ENCODE measurements at regions of chr22 and their contacts with region 1.

Region 1: DNA sequence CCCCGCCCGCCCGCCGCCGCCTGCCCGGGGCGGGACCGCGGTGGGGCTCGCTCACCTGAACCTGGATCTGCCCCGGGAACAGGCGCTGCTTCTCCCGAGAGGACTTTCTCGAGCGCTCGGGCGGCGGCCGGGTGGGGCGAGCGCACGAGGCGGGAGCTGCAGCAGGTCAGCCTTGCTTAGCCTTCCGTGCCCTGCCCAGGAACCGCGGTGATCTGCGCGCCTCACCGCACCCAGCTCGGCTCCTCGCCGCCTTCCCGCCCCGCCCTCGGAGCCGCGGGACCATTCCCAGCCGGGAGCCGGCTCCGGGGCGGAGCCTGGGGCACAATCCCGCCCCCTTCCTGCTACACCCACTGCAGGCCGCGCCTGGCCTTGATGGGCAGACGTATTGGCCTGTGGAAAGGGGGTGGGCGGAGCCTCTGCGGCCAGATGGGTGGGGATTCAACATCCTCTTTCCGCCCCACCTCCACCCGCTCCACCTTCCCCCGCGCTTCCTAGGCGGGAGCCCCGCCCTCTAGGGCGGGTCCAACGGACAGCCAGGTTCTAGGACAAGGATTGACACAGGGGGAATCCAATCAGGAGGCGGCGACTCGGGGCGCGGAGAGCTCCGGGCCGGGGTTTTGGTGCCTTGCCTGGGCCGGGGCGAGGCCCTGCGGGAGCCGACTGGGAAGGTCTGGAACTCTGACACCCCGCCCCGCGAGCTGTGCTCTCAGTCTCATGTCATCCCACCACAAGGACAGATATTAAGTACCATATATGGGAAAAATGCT is at the start of gene MYH9:
- DNase-seq: peak; percentile 96 to 100 (median 99)
- ATAC-seq: peak; percentile 77
- H3K4me3 ChIP-seq: peak within 1 kb of the TSS; percentile 88 to 94
- H3K4me3 Mint-ChIP-seq: peak within 1 kb of the TSS; percentile 94
- H3K27ac ChIP-seq: peak within 1 kb of the TSS; percentile 79 to 82
- H3K27ac Mint-ChIP-seq: peak within 1 kb of the TSS; percentile 95
- H3K4me1 ChIP-seq: peaks cover 27% of the 10 kb centered on the region
- H3K4me1 Mint-ChIP-seq: peaks cover 43% of the 10 kb centered on the region
- H3K27me3 ChIP-seq: no peaks in the 10 kb centered on the region
- H3K27me3 Mint-ChIP-seq: no peaks in the 10 kb centered on the region
- CTCF ChIP-seq: no peak
- total RNA-seq, gene MYH9: 703 to 757 TPM

Region 2: GRCh38 chr22:35961480-35962295 is 426.2 kb before region 1 on chr22:
- CTCF ChIA-PET with region 1: no interaction called
- POLR2A ChIA-PET with region 1: no interaction called
- intact Hi-C with region 1: no loop called
- DNase-seq: no peak
- ATAC-seq: no peak
- H3K4me3 ChIP-seq: no peak overlapping the region
- H3K4me3 Mint-ChIP-seq: no peak overlapping the region
- H3K27ac ChIP-seq: no peak overlapping the region
- H3K27ac Mint-ChIP-seq: no peak overlapping the region
- H3K4me1 ChIP-seq: no peaks in the 10 kb centered on the region
- H3K4me1 Mint-ChIP-seq: no peaks in the 10 kb centered on the region
- H3K27me3 ChIP-seq: no peaks in the 10 kb centered on the region
- H3K27me3 Mint-ChIP-seq: peaks cover 5% of the 10 kb centered on the region
- CTCF ChIP-seq: no peak

Region 3: DNA sequence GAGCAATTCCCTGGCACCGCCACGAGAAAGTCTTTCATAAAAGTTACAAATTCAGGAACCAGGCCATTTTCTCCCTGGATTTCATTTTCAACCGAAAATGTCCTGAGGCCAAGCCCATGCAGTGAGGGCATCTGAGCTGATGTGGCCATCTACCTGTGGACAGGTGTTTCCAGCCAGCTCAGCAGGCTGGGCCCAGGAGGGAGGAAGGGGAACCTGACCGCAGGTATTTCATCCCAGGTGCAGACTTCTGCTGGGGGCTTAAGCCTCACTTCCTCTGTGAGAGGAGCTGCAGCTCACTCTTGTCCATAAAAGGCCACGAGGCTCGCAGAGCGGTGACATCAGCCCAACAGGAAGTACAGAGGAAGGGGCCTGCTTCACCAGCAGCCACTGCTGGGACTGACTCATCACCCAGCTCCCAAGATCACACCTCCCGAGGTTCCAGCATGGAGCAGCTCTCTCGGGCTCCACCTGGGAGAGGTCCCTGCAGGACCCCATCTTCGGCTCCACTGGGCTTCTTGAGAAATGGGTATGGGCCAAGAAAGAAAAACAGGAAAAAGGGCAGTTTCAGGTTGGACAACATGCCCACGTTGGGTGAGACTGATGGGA is 56.5 kb before region 1 on chr22:
- CTCF ChIA-PET with region 1: interaction called, 29 read pairs
- POLR2A ChIA-PET with region 1: interaction called, 124 read pairs
- intact Hi-C with region 1: loop called (anchors 1 kb)
- DNase-seq: peak; percentile 48 to 94 (median 81)
- ATAC-seq: peak; percentile 51
- H3K4me3 ChIP-seq: peak overlapping the region; percentile 38 to 42
- H3K4me3 Mint-ChIP-seq: peak overlapping the region; percentile 86
- H3K27ac ChIP-seq: peak overlapping the region; percentile 80 to 93
- H3K27ac Mint-ChIP-seq: peak overlapping the region; percentile 99
- H3K4me1 ChIP-seq: peaks cover 95% of the 10 kb centered on the region
- H3K4me1 Mint-ChIP-seq: peaks cover 99% of the 10 kb centered on the region
- H3K27me3 ChIP-seq: no peaks in the 10 kb centered on the region
- H3K27me3 Mint-ChIP-seq: no peaks in the 10 kb centered on the region
- CTCF ChIP-seq: no peak

Region 4: DNA sequence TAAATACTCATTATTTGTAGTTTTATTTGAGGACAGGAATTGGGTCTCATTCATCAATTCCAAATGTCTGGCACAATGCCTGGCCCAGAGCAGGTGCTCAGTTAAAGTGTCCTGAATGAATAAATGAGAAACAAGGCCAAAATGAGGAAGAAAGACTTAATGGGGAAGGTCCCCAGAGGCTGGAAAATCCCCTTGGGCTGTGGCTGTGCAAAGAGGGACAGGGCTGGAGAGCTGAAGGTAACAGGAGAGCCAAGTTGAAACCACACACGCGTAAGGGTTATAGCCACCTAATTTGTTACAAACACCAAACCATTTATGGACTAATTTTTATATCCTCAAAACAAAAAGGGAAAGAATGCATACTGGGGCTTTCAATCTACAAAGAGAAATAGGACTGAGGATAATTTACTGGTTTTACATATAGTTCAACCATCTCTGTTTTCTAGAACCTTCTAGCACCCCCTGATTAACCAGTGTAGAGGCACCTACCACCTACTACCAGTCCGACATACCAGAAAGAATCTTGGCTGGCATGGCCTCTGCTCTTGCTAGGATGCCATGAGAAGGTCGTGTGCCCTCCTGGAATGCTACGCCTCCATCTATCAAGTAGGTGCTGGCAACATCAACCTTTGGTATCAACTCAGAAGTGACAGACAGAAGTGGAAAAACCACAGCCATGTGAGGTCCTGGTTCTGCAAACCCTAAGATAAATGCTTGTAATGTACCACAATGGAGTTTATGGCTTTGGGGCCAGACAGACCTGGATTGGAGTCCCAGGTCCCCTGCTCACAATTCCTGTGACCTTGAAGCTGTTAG is 28.5 kb before region 1 on chr22:
- CTCF ChIA-PET with region 1: interaction called, 6 read pairs
- POLR2A ChIA-PET with region 1: interaction called, 16 read pairs
- intact Hi-C with region 1: loop called (anchors 1 to 2 kb)
- DNase-seq: peak in 2 of 9 experiments; percentile 62 to 75
- ATAC-seq: no peak
- H3K4me3 ChIP-seq: no peak overlapping the region
- H3K4me3 Mint-ChIP-seq: peak overlapping the region; percentile 67
- H3K27ac ChIP-seq: peak overlapping the region in 1 of 2 experiments; percentile 77
- H3K27ac Mint-ChIP-seq: peak overlapping the region; percentile 92
- H3K4me1 ChIP-seq: peaks cover 97% of the 10 kb centered on the region
- H3K4me1 Mint-ChIP-seq: peaks cover 95% of the 10 kb centered on the region
- H3K27me3 ChIP-seq: no peaks in the 10 kb centered on the region
- H3K27me3 Mint-ChIP-seq: no peaks in the 10 kb centered on the region
- CTCF ChIP-seq: no peak

Region 5: GRCh38 chr22:36409911-36410756 is 22.2 kb after region 1 on chr22:
- CTCF ChIA-PET with region 1: interaction called, 5 read pairs
- POLR2A ChIA-PET with region 1: interaction called, 26 read pairs
- intact Hi-C with region 1: loop called (anchors 1 to 2 kb)
- DNase-seq: peak; percentile 18 to 85 (median 75)
- ATAC-seq: peak; percentile 70
- H3K4me3 ChIP-seq: peak overlapping the region; percentile 28 to 58
- H3K4me3 Mint-ChIP-seq: peak overlapping the region; percentile 72
- H3K27ac ChIP-seq: peak overlapping the region; percentile 40 to 53
- H3K27ac Mint-ChIP-seq: peak overlapping the region; percentile 93
- H3K4me1 ChIP-seq: peaks cover 57% of the 10 kb centered on the region
- H3K4me1 Mint-ChIP-seq: peaks cover 51% of the 10 kb centered on the region
- H3K27me3 ChIP-seq: no peaks in the 10 kb centered on the region
- H3K27me3 Mint-ChIP-seq: no peaks in the 10 kb centered on the region
- CTCF ChIP-seq: no peak

Region 6: GRCh38 chr22:36470162-36470993 is 82.4 kb after region 1 on chr22:
- CTCF ChIA-PET with region 1: interaction called, 28 read pairs
- POLR2A ChIA-PET with region 1: interaction called, 7 read pairs
- intact Hi-C with region 1: no loop called
- DNase-seq: peak; percentile 71 to 91 (median 82)
- ATAC-seq: peak; percentile 98
- H3K4me3 ChIP-seq: no peak overlapping the region
- H3K4me3 Mint-ChIP-seq: no peak overlapping the region
- H3K27ac ChIP-seq: no peak overlapping the region
- H3K27ac Mint-ChIP-seq: peak overlapping the region; percentile 75
- H3K4me1 ChIP-seq: peaks cover 14% of the 10 kb centered on the region
- H3K4me1 Mint-ChIP-seq: peaks cover 18% of the 10 kb centered on the region
- H3K27me3 ChIP-seq: no peaks in the 10 kb centered on the region
- H3K27me3 Mint-ChIP-seq: no peaks in the 10 kb centered on the region
- CTCF ChIP-seq: peak; percentile 88

Region 7: DNA sequence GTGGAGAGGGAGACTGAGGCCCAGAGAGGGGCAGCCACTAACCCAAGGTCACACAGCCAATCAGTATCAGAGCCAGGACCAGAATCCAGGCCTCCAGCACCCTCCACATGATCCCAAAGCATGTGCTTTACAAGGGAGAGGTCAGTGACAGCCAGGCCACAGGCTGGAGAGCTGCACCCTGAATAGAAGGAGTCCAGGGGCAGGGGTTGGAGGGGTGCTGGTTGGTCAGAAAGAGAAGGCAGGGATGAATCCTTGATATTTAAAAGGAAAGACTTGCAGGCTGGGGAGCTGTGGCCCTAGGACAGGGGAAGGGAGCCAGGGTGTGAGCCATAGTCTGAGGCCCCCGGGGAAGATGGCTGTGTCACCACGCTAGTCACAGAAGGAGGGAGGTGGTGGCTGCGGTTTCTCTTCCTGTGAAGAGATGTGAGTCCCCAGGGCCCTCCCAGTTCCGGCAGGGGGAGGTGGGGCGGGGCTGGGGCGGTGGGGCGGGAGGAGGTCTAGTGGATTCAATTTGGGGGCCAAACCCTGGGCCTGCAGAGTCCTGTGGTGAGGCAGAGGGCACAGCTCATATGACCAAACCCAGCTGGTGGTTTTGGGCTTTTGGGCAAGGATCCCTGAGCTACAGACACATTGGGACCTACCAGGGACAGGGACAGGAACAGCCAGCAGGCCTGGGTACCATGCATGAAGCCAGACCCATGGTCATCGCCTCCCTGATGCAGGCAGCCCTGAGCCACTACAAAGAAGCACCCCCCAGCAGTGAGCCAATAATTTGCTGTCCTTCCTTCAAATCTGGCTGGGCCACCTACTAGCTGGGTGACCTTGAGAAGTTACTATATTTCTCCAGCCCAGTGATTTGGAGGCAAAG is 842.1 kb after region 1 on chr22:
- CTCF ChIA-PET with region 1: no interaction called
- POLR2A ChIA-PET with region 1: no interaction called
- intact Hi-C with region 1: loop called in 1 of 2 experiments (anchors 10 kb)
- DNase-seq: peak; percentile 80 to 97 (median 91)
- ATAC-seq: peak; percentile 68
- H3K4me3 ChIP-seq: peak overlapping the region; percentile 36 to 52
- H3K4me3 Mint-ChIP-seq: peak overlapping the region; percentile 80
- H3K27ac ChIP-seq: peak overlapping the region; percentile 75 to 92
- H3K27ac Mint-ChIP-seq: peak overlapping the region; percentile 100
- H3K4me1 ChIP-seq: peaks cover 94% of the 10 kb centered on the region
- H3K4me1 Mint-ChIP-seq: peaks cover 91% of the 10 kb centered on the region
- H3K27me3 ChIP-seq: no peaks in the 10 kb centered on the region
- H3K27me3 Mint-ChIP-seq: no peaks in the 10 kb centered on the region
- CTCF ChIP-seq: no peak

Measured in CD8-positive, alpha-beta T cell (primary cell).